Ascending aorta (tissue), 2 donors: ENCODE measurements at regions of chr7 and their contacts with region 1.

Region 1: DNA sequence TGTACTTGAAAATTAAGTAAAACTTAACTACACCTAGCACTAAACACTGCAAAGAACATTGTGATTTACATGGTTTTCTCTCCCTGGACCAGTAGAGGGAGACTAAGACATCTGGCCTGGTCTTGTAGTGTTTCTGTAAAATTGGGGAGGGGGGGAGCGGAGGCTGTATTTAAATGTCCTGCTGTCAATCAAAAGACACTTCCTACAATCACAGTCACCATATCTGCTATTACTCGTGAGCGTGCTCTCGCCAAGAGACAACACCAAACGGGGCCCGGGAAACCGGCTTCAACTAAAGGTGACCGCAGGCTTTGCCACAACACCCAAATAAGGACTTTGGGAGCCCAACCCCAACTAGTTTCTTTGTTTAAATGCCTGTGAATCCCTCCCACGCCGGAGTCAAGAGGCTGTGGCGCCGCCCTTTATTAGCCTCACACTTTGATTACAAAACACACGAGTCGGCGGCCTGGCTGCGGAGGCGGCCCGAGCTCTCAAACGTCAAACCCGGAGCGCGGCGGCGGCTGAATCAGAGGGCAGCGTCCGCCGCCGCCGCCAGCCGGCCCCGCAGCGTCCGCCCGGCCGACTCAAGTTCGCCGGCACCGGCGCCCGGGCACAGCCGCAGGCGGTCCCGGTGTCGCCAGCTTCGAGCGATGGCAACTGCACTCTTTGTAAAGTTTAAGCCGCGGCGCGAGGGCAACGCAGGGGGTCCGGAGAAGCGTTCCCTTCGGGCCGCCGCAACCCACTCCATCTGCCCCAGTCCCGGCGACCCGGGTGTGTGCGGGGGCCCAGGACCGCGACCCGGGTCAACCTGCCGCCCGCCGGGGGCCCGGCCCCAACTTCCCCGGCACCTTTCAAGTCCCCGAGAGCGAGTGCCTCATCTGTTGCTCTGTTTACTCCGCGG is 1.3 kb downstream of the KDM7A start:
- DNase-seq: peak; percentile 86 to 97
- H3K4me3 ChIP-seq: peak overlapping the region; percentile 94 to 97
- H3K27ac ChIP-seq: peak overlapping the region; percentile 100
- H3K4me1 ChIP-seq: peaks cover 8 to 12% of the 10 kb centered on the region in 2 donors
- H3K27me3 ChIP-seq: no peaks in the 10 kb centered on the region
- CTCF ChIP-seq: peak; percentile 74 to 81 (median 79)

Region 2: GRCh38 chr7:139340037-139340807 is 835.2 kb before region 1 on chr7:
- intact Hi-C with region 1: loop called (anchors 5 kb)
- DNase-seq: peak; percentile 100
- H3K4me3 ChIP-seq: peak overlapping the region; percentile 77 to 87
- H3K27ac ChIP-seq: peak overlapping the region; percentile 99 to 100
- H3K4me1 ChIP-seq: peaks cover 0 to 6% of the 10 kb centered on the region in 2 donors
- H3K27me3 ChIP-seq: no peaks in the 10 kb centered on the region
- CTCF ChIP-seq: peak; percentile 69 to 77 (median 72)

Region 3: GRCh38 chr7:140062528-140063299 is 112.8 kb before region 1 on chr7 and contains the start of gene PARP12:
- intact Hi-C with region 1: loop called (anchors 2 kb)
- DNase-seq: peak in 1 of 2 donors; percentile 89
- H3K4me3 ChIP-seq: peak within 1 kb of the TSS; percentile 87 to 89
- H3K27ac ChIP-seq: peak within 1 kb of the TSS; percentile 91 to 92
- H3K4me1 ChIP-seq: peaks cover 0 to 23% of the 10 kb centered on the region in 2 donors
- H3K27me3 ChIP-seq: no peaks in the 10 kb centered on the region
- CTCF ChIP-seq: peak in 1 of 3 experiments; percentile 7
- total RNA-seq, gene PARP12: 54.6 TPM

Region 4: GRCh38 chr7:140230861-140231770 is 55.6 kb after region 1 on chr7:
- intact Hi-C with region 1: loop called (anchors 2 kb)
- DNase-seq: no peak
- H3K4me3 ChIP-seq: peak overlapping the region; percentile 60 to 69
- H3K27ac ChIP-seq: no peak overlapping the region
- H3K4me1 ChIP-seq: peaks cover 2 to 4% of the 10 kb centered on the region in 2 donors
- H3K27me3 ChIP-seq: peaks cover 6% of the 10 kb centered on the region
- CTCF ChIP-seq: no peak

Region 5: GRCh38 chr7:140326116-140326928 is 150.9 kb after region 1 on chr7:
- intact Hi-C with region 1: loop called (anchors 1 kb)
- DNase-seq: peak in 1 of 2 donors; percentile 83
- H3K4me3 ChIP-seq: peak overlapping the region in 1 of 2 donors; percentile 40
- H3K27ac ChIP-seq: peak overlapping the region; percentile 14 to 36
- H3K4me1 ChIP-seq: peaks cover 0 to 3% of the 10 kb centered on the region in 2 donors
- H3K27me3 ChIP-seq: no peaks in the 10 kb centered on the region
- CTCF ChIP-seq: peak; percentile 66 to 84 (median 66)

Region 6: GRCh38 chr7:140390466-140391190 is 215.2 kb after region 1 on chr7:
- intact Hi-C with region 1: no loop called
- DNase-seq: no peak
- H3K4me3 ChIP-seq: no peak overlapping the region
- H3K27ac ChIP-seq: no peak overlapping the region
- H3K4me1 ChIP-seq: no peaks in the 10 kb centered on the region
- H3K27me3 ChIP-seq: no peaks in the 10 kb centered on the region
- CTCF ChIP-seq: no peak

Region 7: DNA sequence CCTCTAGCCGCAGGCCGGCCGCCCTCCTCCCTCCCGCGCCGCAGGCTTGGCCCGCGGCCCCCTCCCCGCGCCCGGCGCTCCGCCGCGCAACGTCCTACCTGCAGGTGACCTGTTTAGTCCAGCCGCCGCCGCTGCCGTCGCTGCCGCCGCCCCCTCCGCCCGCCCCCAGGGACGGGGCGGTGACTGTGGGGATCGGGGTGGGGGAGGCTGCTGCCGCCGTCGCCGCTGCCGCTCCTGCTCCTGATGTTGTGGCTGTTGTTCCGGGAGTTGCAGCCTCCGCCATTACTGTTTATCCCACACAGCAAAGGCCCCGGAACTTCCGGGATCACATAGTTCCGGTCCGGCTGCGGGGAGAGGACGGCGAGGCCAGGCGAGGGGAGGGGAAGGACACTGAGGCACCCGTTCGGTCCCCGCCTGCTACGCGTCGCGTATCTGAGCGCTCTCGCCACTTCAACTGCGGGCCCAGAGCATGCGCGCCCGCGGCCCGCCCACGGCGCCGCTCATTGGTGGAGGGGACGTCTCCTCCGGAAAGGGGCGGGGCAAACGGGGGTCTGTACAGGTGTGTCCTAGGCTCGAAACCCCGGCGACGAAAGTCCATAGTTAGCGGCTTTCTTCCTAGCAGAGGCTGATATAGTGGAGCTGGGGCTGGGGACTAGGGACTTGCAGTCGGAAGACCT is 303.7 kb after region 1 on chr7 and contains the start of gene MKRN1:
- intact Hi-C with region 1: loop called (anchors 5 kb)
- DNase-seq: peak; percentile 80 to 96
- H3K4me3 ChIP-seq: peak within 1 kb of the TSS; percentile 90 to 93
- H3K27ac ChIP-seq: peak within 1 kb of the TSS; percentile 73 to 87
- H3K4me1 ChIP-seq: peaks cover 5 to 20% of the 10 kb centered on the region in 2 donors
- H3K27me3 ChIP-seq: no peaks in the 10 kb centered on the region
- CTCF ChIP-seq: no peak
- total RNA-seq, gene MKRN1: 20.6 TPM